K562 (cell line): ENCODE measurements at regions of chr21 and their contacts with region 1.

Region 1: GRCh38 chr21:46253610-46254124 is 25.1 kb upstream of the LSS start:
- DNase-seq: peak; percentile 40 to 76 (median 54)
- ATAC-seq: peak; percentile 95
- H3K4me3 ChIP-seq: no peak overlapping the region
- H3K27ac ChIP-seq: peak overlapping the region; percentile 64; the same call in 2 of the 3 replicates
- H3K4me1 ChIP-seq: peaks cover 5 to 11% of the 10 kb centered on the region in 2 experiments; a peak in 3 of 5 replicates
- H3K27me3 ChIP-seq: no peaks in the 10 kb centered on the region
- CTCF ChIP-seq: no peak
- EP300 ChIP-seq: no peak
- POLR2A ChIP-seq: no peak; the same call in 1 of the 2 replicates
- RAD21 ChIP-seq: no peak

Region 2: DNA sequence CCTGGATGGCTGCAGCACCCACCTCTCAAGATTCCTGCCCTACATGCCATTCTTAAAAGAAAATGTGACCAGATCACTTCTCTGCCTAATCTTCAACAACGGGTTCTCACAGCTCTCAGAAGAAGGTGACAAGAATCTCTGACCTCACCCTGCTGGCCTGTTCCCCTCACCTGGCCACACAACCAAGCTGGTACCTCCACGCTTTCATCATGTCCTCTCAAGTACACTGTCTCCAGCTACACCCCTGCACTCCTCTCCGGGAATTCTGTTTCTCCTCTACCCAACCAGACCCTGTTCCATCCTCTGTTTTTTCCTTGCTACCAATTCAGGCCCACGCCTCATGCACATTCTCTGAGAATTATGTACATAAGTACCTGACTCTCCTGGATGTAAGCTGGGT is 19.2 kb before region 1 on chr21:
- CTCF ChIA-PET with region 1: no interaction called
- POLR2A ChIA-PET with region 1: interaction called, 11 read pairs
- in situ Hi-C with region 1: no loop called
- intact Hi-C with region 1: no loop called
- DNase-seq: no peak
- ATAC-seq: 0 out of 3 replicates have a peak, but pooled peaks have one; percentile 14
- H3K4me3 ChIP-seq: no peak overlapping the region
- H3K27ac ChIP-seq: no peak overlapping the region
- H3K4me1 ChIP-seq: peaks cover 11 to 20% of the 10 kb centered on the region in 2 experiments; a peak in 4 of 5 replicates
- H3K27me3 ChIP-seq: no peaks in the 10 kb centered on the region
- CTCF ChIP-seq: no peak
- EP300 ChIP-seq: no peak
- POLR2A ChIP-seq: peak; percentile 41
- RAD21 ChIP-seq: no peak

Region 3: DNA sequence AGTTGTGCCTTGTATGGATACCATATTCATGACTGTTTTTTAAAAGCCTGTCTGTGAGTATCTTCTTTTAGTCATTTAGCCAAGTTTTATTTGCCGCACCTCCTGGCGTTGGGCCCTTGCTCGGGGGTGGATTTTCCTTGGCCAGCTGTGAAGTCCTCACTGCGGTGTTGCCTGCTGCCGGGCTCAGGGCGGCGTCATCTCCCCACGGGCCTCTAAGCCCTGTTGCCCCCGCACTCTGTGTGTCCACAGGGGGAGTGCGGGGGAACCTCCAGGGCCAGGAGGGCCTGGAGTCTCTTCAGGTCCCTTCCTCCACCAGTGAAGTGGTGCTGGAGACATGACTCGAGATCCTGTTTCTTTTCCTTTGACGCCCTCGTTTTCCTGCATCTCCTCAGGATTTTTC is 139.3 kb after region 1 on chr21:
- CTCF ChIA-PET with region 1: no interaction called
- POLR2A ChIA-PET with region 1: no interaction called
- in situ Hi-C with region 1: no loop called
- intact Hi-C with region 1: no loop called
- DNase-seq: no peak
- ATAC-seq: peak; percentile 50
- H3K4me3 ChIP-seq: no peak overlapping the region
- H3K27ac ChIP-seq: no peak overlapping the region
- H3K4me1 ChIP-seq: peaks cover 5 to 24% of the 10 kb centered on the region in 2 experiments; a peak in 4 of 5 replicates
- H3K27me3 ChIP-seq: no peaks in the 10 kb centered on the region
- CTCF ChIP-seq: 0 out of 6 replicates have a peak, but pooled peaks of 1 of the 3 experiments have one; percentile 15
- EP300 ChIP-seq: no peak
- POLR2A ChIP-seq: no peak
- RAD21 ChIP-seq: no peak